K562 (cell line): ENCODE measurements at regions of chr5 and their contacts with region 1.

Region 1: GRCh38 chr5:120466341-120467006 is 2.4 kb downstream of the PRR16 start:
- DNase-seq: peak in 1 of 4 experiments; percentile 4
- ATAC-seq: no peak
- H3K4me3 ChIP-seq: peak overlapping the region; percentile 54
- H3K27ac ChIP-seq: peak overlapping the region; percentile 55; the same call in 2 of the 3 replicates
- H3K4me1 ChIP-seq: peaks cover 3 to 10% of the 10 kb centered on the region in 2 experiments; a peak in 3 of 5 replicates
- H3K27me3 ChIP-seq: no peaks in the 10 kb centered on the region
- CTCF ChIP-seq: no peak
- EP300 ChIP-seq: no peak
- POLR2A ChIP-seq: no peak
- RAD21 ChIP-seq: no peak

Region 2: DNA sequence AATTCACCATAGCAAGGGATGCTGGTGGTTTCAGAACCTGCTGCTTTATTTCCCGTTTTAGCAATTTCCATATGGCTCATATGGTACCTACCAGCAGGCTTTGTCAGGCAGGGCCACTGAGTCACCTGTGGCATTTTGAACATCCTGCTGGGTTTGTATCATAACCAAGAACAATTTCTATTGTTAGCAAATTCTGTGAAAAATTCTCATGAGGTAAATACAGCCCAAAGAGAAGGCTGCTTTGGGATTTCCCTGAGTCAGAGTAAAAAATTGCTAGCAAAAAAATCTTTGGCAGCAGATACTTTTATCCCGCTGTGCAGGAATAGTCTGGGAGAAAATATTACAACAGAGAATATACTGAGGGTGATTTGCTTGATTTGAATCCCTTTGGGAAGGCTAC is 50.3 kb after region 1 on chr5:
- CTCF ChIA-PET with region 1: no interaction called
- POLR2A ChIA-PET with region 1: no interaction called
- in situ Hi-C with region 1: no loop called
- intact Hi-C with region 1: loop called (anchors 1 kb)
- DNase-seq: no peak
- ATAC-seq: no peak
- H3K4me3 ChIP-seq: no peak overlapping the region
- H3K27ac ChIP-seq: peak overlapping the region; percentile 50; the same call in 1 of the 3 replicates
- H3K4me1 ChIP-seq: peaks cover 0 to 16% of the 10 kb centered on the region in 2 experiments; a peak in 2 of 5 replicates
- H3K27me3 ChIP-seq: no peaks in the 10 kb centered on the region
- CTCF ChIP-seq: no peak
- EP300 ChIP-seq: no peak
- POLR2A ChIP-seq: no peak
- RAD21 ChIP-seq: no peak